ENCODE measurements at regions of chr3 and their contacts with region 1.

Region 1: GRCh38 chr3:53072653-53073552 is 27.0 kb upstream of the SFMBT1 start:
- DNase-seq: peak; percentile 48
- ATAC-seq: peak; percentile 93
- H3K4me3 ChIP-seq: peak overlapping the region; percentile 46 to 62
- H3K27ac ChIP-seq: peak overlapping the region; percentile 47; the same call in 1 of the 2 replicates
- H3K4me1 ChIP-seq: peaks cover 6 to 16% of the 10 kb centered on the region in 2 experiments; a peak in 3 of 4 replicates
- H3K27me3 ChIP-seq: no peaks in the 10 kb centered on the region
- CTCF ChIP-seq: peak; percentile 76 to 91 (median 89); a peak in 5 of 6 replicates
- POLR2A ChIP-seq: peak; percentile 39
- RAD21 ChIP-seq: peak; percentile 95

Region 2: GRCh38 chr3:52471371-52472238 is 601.3 kb before region 1 on chr3:
- CTCF ChIA-PET with region 1: no interaction called
- POLR2A ChIA-PET with region 1: no interaction called
- RAD21 ChIA-PET with region 1: no interaction called
- intact Hi-C with region 1: loop called (anchors 10 kb)
- DNase-seq: no peak
- ATAC-seq: peak; percentile 92
- H3K4me3 ChIP-seq: no peak overlapping the region
- H3K27ac ChIP-seq: no peak overlapping the region
- H3K4me1 ChIP-seq: no peaks in the 10 kb centered on the region
- H3K27me3 ChIP-seq: no peaks in the 10 kb centered on the region
- CTCF ChIP-seq: peak; percentile 41 to 77 (median 73); a peak in 5 of 6 replicates
- POLR2A ChIP-seq: no peak
- RAD21 ChIP-seq: peak; percentile 75

Region 3: DNA sequence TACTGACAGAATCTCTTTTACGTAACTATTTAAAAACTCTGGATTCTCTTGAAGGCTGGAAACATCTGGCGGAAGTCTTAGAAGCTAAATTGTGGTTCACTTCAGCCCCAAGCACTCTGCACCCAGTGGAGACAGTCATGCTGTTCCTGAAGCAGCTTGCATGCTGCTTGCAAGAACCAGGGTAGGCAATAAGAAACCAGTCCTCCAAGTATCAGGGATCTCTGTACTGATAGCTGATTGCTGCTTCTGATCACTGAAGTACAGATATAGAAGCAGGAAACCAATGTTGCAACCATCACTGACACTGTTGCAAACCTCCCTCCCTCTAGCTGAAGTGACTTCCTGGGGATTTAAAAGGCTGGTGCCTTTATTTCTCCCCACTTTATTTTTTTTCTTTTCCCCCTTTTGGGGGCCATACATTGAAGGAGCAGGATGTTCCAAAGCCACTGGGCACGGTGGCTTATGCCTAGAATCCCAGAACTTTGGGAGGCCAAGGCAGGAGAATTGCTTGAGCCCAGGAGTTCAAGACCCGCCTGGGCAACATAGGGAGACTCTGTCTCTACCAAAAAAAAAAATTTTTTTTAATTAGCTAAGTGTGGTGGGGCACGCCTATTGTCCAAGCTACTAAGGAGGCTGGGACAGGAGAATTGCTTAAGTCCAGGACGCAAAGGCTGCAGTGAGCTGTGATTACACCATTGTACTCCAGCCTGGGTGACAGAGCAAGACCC is 351.7 kb before region 1 on chr3:
- CTCF ChIA-PET with region 1: no interaction called
- POLR2A ChIA-PET with region 1: no interaction called
- RAD21 ChIA-PET with region 1: no interaction called
- intact Hi-C with region 1: no loop called
- DNase-seq: no peak
- ATAC-seq: no peak
- H3K4me3 ChIP-seq: no peak overlapping the region
- H3K27ac ChIP-seq: no peak overlapping the region
- H3K4me1 ChIP-seq: no peaks in the 10 kb centered on the region
- H3K27me3 ChIP-seq: no peaks in the 10 kb centered on the region
- CTCF ChIP-seq: no peak
- POLR2A ChIP-seq: no peak
- RAD21 ChIP-seq: no peak

Region 4: GRCh38 chr3:52934630-52935530 is 138.0 kb before region 1 on chr3:
- CTCF ChIA-PET with region 1: interaction called, 3 read pairs
- POLR2A ChIA-PET with region 1: no interaction called
- RAD21 ChIA-PET with region 1: no interaction called
- intact Hi-C with region 1: loop called (anchors 10 kb)
- DNase-seq: peak; percentile 23
- ATAC-seq: peak; percentile 98
- H3K4me3 ChIP-seq: no peak overlapping the region
- H3K27ac ChIP-seq: no peak overlapping the region
- H3K4me1 ChIP-seq: no peaks in the 10 kb centered on the region
- H3K27me3 ChIP-seq: no peaks in the 10 kb centered on the region
- CTCF ChIP-seq: peak; percentile 53 to 78 (median 76); a peak in 5 of 6 replicates
- POLR2A ChIP-seq: no peak
- RAD21 ChIP-seq: peak; percentile 52

Region 5: GRCh38 chr3:53531749-53532148 is 458.8 kb after region 1 on chr3:
- CTCF ChIA-PET with region 1: no interaction called
- POLR2A ChIA-PET with region 1: no interaction called
- RAD21 ChIA-PET with region 1: no interaction called
- intact Hi-C with region 1: no loop called
- DNase-seq: peak; percentile 6
- ATAC-seq: 0 out of 2 replicates have a peak, but pooled peaks have one; percentile 47
- H3K4me3 ChIP-seq: no peak overlapping the region
- H3K27ac ChIP-seq: no peak overlapping the region
- H3K4me1 ChIP-seq: no peaks in the 10 kb centered on the region
- H3K27me3 ChIP-seq: peaks cover 20% of the 10 kb centered on the region
- CTCF ChIP-seq: peak in 2 of 3 experiments; percentile 20 to 32; a peak in 2 of 6 replicates
- POLR2A ChIP-seq: no peak
- RAD21 ChIP-seq: peak; percentile 45

Measured in HCT116 (cell line).